ENCODE measurements at regions of chr11 and their contacts with region 1.

Region 1: GRCh38 chr11:15650105-15650938 is 535.6 kb downstream of the INSC start:
- DNase-seq: peak; percentile 87
- ATAC-seq: peak; percentile 98
- H3K4me3 ChIP-seq: peak overlapping the region; percentile 29; the same call in 1 of the 2 replicates
- H3K27ac ChIP-seq: peak overlapping the region; percentile 68
- H3K4me1 ChIP-seq: peaks cover 9% of the 10 kb centered on the region
- H3K27me3 ChIP-seq: no peaks in the 10 kb centered on the region; the same call in 1 of the 2 replicates
- CTCF ChIP-seq: peak; percentile 98
- POLR2A ChIP-seq: peak; percentile 56
- RAD21 ChIP-seq: peak; percentile 97

Region 2: GRCh38 chr11:15714641-15715399 is 64.5 kb after region 1 on chr11:
- CTCF ChIA-PET with region 1: interaction called, 3 read pairs
- POLR2A ChIA-PET with region 1: interaction called, 4 read pairs
- dilution Hi-C with region 1: no loop called
- in situ Hi-C with region 1: no loop called
- intact Hi-C with region 1: loop called (anchors 5 kb)
- DNase-seq: peak; percentile 60
- ATAC-seq: peak; percentile 58
- H3K4me3 ChIP-seq: no peak overlapping the region
- H3K27ac ChIP-seq: peak overlapping the region; percentile 64; the same call in 1 of the 2 replicates
- H3K4me1 ChIP-seq: peaks cover 16% of the 10 kb centered on the region
- H3K27me3 ChIP-seq: no peaks in the 10 kb centered on the region; the same call in 1 of the 2 replicates
- CTCF ChIP-seq: no peak
- POLR2A ChIP-seq: no peak
- RAD21 ChIP-seq: no peak

Region 3: DNA sequence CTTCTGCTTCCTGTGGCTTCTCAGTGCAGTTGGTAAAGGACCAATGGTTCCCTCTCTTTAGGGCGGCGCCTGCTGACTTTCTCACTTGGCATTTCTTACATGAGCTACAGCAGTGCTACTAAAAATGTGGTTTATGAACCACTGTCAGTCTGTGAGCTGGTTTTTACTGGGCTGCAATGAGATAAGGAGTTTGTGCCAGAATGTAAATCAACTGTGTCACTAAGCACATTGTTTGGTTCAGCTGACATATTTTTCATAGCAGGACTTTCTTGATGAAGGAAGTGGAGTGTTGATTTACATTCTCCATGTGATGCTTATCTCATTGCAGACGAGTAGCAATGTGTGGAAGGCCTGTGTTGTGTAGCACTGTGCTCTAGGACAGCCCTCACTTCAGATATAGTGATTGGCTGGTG is 242.8 kb after region 1 on chr11:
- CTCF ChIA-PET with region 1: no interaction called
- POLR2A ChIA-PET with region 1: interaction called, 7 read pairs
- dilution Hi-C with region 1: no loop called
- in situ Hi-C with region 1: no loop called
- intact Hi-C with region 1: loop called (anchors 5 kb)
- DNase-seq: peak; percentile 89
- ATAC-seq: peak; percentile 77
- H3K4me3 ChIP-seq: no peak overlapping the region
- H3K27ac ChIP-seq: peak overlapping the region; percentile 88
- H3K4me1 ChIP-seq: peaks cover 44% of the 10 kb centered on the region
- H3K27me3 ChIP-seq: no peaks in the 10 kb centered on the region
- CTCF ChIP-seq: no peak
- POLR2A ChIP-seq: no peak
- RAD21 ChIP-seq: no peak; the same call in 1 of the 2 replicates

Region 4: DNA sequence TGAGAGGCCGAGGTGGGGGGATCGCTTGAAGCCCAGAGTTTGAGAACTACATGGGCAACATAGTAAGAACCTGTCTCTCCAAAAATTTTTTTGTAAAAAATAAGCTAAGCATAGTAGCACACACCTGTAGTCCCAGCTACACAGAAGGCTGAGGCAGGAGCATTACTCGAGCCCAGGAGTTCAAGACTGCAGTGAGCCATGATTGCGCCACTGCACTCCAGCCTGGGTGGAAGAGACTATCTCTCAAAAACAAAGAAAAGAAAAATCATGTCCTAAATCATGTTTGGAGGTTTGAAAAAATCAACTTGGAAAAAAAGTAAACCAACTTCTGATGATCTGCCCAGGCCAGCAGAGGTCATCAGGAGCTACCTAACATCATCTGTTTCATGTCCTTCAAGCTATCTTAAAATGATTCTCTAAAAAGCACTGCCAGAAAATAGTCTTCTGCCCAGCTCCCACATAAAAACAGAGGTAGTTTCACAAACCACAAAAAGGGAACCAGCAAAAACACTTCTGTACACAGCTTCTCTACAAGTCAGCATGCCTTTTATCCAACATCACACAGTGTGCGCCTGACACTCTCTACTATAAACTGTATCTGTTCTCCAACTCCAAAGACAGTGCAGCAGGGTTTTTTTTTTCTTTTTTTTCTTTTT is 541.0 kb after region 1 on chr11:
- CTCF ChIA-PET with region 1: no interaction called
- POLR2A ChIA-PET with region 1: no interaction called
- dilution Hi-C with region 1: no loop called
- in situ Hi-C with region 1: no loop called
- intact Hi-C with region 1: loop called (anchors 5 kb)
- DNase-seq: peak; percentile 18
- ATAC-seq: no peak
- H3K4me3 ChIP-seq: no peak overlapping the region
- H3K27ac ChIP-seq: no peak overlapping the region
- H3K4me1 ChIP-seq: peaks cover 5% of the 10 kb centered on the region
- H3K27me3 ChIP-seq: no peaks in the 10 kb centered on the region
- CTCF ChIP-seq: no peak
- POLR2A ChIP-seq: no peak
- RAD21 ChIP-seq: no peak

Region 5: GRCh38 chr11:16738193-16738946 is 1088.0 kb after region 1 on chr11 and contains the start of gene C11orf58:
- CTCF ChIA-PET with region 1: no interaction called
- POLR2A ChIA-PET with region 1: no interaction called
- dilution Hi-C with region 1: no loop called
- in situ Hi-C with region 1: no loop called
- intact Hi-C with region 1: loop called (anchors 10 kb)
- DNase-seq: peak; percentile 96
- ATAC-seq: peak; percentile 98
- H3K4me3 ChIP-seq: peak within 1 kb of the TSS; percentile 89
- H3K27ac ChIP-seq: peak within 1 kb of the TSS; percentile 98
- H3K4me1 ChIP-seq: 0 out of 2 replicates have a peak, but pooled peaks cover 2% of the 10 kb centered on the region
- H3K27me3 ChIP-seq: no peaks in the 10 kb centered on the region
- CTCF ChIP-seq: no peak
- POLR2A ChIP-seq: peak; percentile 94
- RAD21 ChIP-seq: no peak
- total RNA-seq, gene C11orf58: 53.8 and 238 TPM in 2 replicates

Measured in IMR-90 (cell line).